BJ (cell line): ENCODE measurements at regions of chr3 and their contacts with region 1.

Region 1: DNA sequence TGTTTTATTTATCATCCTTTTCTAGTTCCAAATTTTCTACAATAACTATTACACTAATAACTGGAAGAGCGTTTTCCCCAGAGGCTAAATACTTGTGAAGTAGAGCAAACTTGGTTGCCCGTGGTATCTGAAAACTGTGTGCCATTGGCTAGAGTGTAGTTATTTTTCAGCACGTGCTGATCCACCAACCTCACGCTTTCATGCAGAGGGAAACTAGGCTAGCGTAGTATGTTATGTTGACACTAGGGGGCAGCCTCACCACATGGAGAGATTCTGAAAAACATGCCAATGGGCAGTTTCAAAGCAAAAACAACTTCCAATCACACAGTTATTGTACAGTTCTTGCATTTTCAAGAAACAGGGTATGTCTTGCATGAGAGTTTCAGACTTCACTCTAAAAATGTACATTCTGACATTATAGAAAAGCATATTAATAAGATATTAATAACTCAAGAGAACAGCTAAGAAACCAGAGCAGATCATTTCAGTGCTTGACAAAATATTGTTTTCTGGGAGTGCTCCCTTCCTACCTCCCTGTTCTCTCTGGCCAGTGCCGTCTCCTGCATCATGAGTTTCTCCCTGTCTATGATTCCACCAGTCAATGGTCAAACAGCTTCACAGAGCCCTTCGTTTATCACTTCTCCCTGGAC is 39.7 kb downstream of the SPATA12 start:
- DNase-seq: peak; percentile 20
- H3K4me3 ChIP-seq: no peak overlapping the region
- H3K27me3 ChIP-seq: no peaks in the 10 kb centered on the region
- CTCF ChIP-seq: peak; percentile 85

Region 2: DNA sequence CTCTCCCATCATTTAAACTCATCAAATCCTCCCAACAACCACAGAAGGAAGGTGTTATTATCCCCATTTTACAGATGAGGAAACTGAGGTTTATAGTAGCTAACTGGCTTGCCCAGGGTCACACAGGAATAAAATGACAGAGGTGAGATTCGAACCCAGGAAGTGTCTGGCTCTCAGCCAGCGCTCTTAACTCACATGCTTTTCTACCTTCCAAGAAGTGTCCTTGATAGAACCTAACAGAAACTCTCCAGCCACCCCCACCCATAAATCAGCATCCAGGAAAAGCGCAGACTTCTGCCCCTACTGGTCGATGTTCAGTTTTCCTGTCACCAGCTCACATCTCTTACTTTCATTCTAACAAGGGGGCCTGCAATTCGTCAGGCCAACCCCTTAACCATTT is 12.0 kb after region 1 on chr3:
- CTCF ChIA-PET with region 1: interaction called, 18 read pairs
- POLR2A ChIA-PET with region 1: no interaction called
- DNase-seq: no peak
- H3K4me3 ChIP-seq: no peak overlapping the region
- H3K27me3 ChIP-seq: no peaks in the 10 kb centered on the region
- CTCF ChIP-seq: no peak

Region 3: DNA sequence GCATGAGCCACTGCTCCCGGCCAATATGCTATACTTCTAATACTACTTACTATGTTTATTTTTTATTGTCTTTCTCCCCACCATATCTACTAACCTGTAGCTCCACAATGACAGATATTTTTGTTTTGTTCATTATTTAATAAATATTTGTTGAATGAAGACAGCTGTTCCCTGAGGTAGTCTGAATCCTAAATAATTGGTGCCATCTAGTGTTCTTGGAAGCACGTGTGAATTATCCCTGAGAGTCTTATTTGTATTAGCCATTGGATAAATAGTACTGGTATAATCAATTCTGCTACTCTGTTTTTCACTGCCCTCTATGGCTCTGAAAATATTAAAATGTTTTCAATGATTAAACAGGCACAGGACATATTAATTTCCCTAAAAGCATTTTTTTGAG is 121.7 kb after region 1 on chr3:
- CTCF ChIA-PET with region 1: interaction called, 19 read pairs
- POLR2A ChIA-PET with region 1: no interaction called
- DNase-seq: no peak
- H3K4me3 ChIP-seq: no peak overlapping the region
- H3K27me3 ChIP-seq: no peaks in the 10 kb centered on the region
- CTCF ChIP-seq: peak; percentile 29; the same call in 1 of the 2 replicates

Region 4: DNA sequence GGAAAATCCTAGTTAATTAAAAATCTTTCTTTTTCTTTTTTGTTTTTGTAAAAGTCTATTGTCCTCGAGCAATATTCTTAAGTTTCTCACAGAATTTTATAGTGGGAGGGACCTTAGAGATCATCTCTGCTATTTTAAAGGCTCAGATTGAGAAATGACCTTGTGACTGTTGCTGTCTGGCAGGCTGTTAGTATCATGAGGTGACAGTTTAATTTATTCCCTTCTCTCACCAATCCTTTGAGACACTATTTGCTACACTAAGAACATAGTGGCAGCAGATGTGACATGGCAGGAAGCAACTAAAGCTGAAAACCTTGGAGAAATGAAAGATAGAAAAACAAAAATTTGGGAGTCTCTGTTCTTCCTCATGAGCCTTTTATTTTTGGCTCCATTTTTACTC is 152.2 kb after region 1 on chr3:
- CTCF ChIA-PET with region 1: no interaction called
- POLR2A ChIA-PET with region 1: no interaction called
- DNase-seq: no peak
- H3K4me3 ChIP-seq: no peak overlapping the region
- H3K27me3 ChIP-seq: no peaks in the 10 kb centered on the region
- CTCF ChIP-seq: no peak